ENCODE measurements at regions of chr20 and their contacts with region 1.

Region 1: DNA sequence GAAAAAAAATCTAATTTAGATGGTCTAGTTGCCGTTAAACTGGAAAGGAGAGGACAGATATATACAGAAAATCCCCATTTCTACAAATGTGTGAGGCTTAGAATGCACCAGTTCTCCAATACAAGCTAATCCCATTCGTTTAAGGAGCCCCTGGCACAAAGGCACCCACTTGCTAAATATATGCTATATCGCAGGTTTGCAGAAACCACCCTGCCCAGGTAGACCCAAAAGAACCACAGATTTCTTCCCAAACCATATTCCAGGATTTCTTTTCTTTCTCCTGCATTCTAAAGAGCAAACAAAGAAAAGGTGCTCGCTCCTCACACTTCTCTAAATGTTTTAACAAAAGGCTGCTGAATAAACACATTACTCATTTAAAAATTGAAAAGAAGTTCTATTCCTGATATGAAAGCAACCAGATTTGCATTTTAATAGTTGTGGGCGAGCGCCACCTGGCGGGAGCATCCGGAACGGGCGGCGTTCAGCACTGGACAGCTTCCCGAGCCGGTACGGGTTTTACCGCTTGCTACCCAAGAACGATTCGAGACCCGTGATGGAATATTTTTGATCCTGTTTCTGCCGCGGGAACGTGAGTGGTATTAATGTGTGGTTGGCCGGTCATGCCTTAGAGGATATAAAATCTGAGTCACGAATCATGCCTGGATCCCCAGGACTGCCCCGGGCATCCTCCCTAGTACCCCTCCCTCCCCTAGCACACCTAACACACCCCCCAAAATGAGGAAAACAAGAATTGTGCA is 2.1 kb downstream of the PTPRT start:
- DNase-seq: peak; percentile 70
- H3K4me3 ChIP-seq: no peak overlapping the region
- H3K27ac ChIP-seq: no peak overlapping the region
- H3K4me1 ChIP-seq: no peaks in the 10 kb centered on the region
- H3K27me3 ChIP-seq: peaks cover 22% of the 10 kb centered on the region
- CTCF ChIP-seq: peak; percentile 95

Region 2: DNA sequence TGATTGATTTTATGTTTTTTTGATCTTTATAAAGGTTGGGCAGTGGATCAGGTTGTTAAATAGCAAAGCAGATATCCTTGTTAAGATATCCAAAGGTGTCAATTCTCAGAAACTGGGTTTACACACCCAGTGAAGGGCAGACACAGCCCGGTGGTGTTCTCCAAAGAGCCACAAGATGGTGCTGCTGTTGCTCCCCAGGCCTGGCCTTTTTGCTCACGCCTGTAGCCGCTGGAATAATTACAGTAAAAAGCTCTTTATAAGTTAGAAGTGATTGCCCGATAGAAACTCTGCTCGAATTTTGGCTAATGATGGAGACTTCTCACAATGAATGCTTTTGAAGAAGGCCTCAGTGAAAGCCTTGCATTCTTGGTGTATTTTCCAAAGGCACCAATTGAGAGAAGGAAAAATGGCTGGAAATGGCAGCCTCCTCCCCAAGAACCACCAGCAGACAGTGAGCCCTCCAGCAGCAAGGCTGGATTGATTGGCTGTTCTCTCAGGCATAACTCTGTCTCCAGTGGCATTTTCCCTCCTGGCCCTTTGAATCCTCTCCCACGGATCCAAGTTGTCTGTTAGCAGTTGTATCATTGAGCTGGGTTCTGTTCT is 1449.0 kb before region 1 on chr20:
- intact Hi-C with region 1: loop called (anchors 5 kb)
- DNase-seq: peak; percentile 41
- H3K4me3 ChIP-seq: no peak overlapping the region
- H3K27ac ChIP-seq: no peak overlapping the region
- H3K4me1 ChIP-seq: no peaks in the 10 kb centered on the region
- H3K27me3 ChIP-seq: no peaks in the 10 kb centered on the region
- CTCF ChIP-seq: peak; percentile 76

Region 3: GRCh38 chr20:41955999-41956705 is 1231.5 kb before region 1 on chr20:
- intact Hi-C with region 1: loop called (anchors 5 kb)
- DNase-seq: no peak
- H3K4me3 ChIP-seq: no peak overlapping the region
- H3K27ac ChIP-seq: no peak overlapping the region
- H3K4me1 ChIP-seq: no peaks in the 10 kb centered on the region
- H3K27me3 ChIP-seq: no peaks in the 10 kb centered on the region
- CTCF ChIP-seq: peak; percentile 23

Region 4: GRCh38 chr20:43271980-43272379 is 84.3 kb after region 1 on chr20:
- intact Hi-C with region 1: no loop called
- DNase-seq: no peak
- H3K4me3 ChIP-seq: no peak overlapping the region
- H3K27ac ChIP-seq: no peak overlapping the region
- H3K4me1 ChIP-seq: no peaks in the 10 kb centered on the region
- H3K27me3 ChIP-seq: no peaks in the 10 kb centered on the region
- CTCF ChIP-seq: no peak

Region 5: GRCh38 chr20:43287637-43288036 is 100.0 kb after region 1 on chr20:
- intact Hi-C with region 1: no loop called
- DNase-seq: no peak
- H3K4me3 ChIP-seq: no peak overlapping the region
- H3K27ac ChIP-seq: no peak overlapping the region
- H3K4me1 ChIP-seq: no peaks in the 10 kb centered on the region
- H3K27me3 ChIP-seq: no peaks in the 10 kb centered on the region
- CTCF ChIP-seq: no peak

Region 6: DNA sequence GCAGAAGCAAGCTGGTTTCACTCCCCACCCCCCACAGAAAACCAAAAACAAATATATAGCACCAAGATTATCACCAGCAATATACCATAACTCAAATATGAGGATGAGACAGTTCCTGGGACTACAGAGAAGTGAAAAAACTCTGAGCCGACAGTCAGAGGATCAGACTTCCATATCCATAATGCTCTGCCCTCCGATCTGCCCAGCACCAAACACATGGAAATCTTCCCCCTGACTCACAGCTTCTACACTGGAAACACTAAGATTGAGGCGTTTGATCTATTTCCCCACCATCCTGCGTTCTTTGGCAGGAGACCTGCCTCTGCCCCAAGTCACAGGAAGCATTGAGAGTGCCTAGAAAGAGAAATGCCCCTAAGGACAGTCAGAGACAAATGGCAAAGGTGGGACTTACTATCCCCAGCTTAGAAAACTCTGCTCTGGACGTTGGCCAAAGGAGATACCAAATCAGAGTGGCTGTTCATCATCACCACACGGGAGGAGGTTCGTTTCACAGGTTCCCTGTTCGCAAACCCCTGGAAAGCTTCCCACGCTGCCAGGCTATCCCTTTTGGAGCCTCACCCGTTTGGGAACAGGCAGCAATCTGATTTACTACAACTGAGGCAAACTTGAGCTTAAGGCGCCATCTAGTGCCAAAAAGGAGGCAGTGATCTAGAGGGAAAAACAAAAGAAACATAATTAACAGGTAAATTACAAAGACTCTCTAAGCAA is 221.4 kb after region 1 on chr20:
- intact Hi-C with region 1: loop called (anchors 5 kb)
- DNase-seq: no peak
- H3K4me3 ChIP-seq: no peak overlapping the region
- H3K27ac ChIP-seq: no peak overlapping the region
- H3K4me1 ChIP-seq: no peaks in the 10 kb centered on the region
- H3K27me3 ChIP-seq: no peaks in the 10 kb centered on the region
- CTCF ChIP-seq: peak; percentile 46

Measured in colonic mucosa (tissue), 4 donors.